ENCODE measurements at regions of chr19 and their contacts with region 1.

Region 1: DNA sequence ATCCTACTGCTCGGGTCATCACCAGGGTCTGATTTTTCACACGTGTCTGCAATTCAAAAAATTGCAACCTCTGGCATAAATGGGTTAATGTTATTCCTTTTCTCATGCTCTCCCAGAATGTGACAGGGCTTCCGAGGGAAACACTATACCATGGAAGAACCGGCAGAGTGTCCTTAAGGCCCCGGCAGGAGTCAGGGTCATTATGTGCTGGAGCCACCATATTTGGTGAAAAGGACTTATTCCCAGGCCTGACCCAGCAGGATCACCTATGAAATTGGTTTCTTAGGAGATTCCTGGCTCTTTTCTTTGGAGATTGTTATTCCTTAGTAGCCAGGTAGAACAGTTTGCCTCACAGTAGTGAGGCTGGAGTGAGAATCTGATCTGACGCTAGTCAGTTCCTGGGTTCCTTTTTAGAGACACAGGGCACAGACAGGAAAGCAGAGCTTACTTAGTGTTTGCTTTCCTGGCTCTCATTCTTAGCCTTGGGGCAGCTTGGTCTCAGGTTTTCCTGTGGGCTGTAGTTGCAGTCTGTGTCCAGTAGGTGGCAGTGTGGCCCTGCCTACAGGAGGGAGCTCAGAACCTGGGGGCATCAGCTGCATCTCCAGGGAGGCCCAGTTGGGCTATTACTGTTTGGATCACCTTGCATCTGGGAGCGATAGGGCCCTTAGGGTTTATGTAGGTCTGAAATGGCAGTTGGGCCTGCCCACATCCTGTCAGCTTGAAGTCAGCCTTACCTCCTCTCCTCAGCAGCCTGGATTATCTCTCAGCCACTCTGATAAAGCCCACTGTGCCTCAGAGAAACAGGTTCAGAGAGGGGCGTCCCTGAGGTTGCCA is 12.4 kb downstream of the SNRNP70 start:
- DNase-seq: peak; percentile 79
- H3K4me3 Mint-ChIP-seq: no peak overlapping the region
- H3K27ac Mint-ChIP-seq: no peak overlapping the region
- H3K4me1 Mint-ChIP-seq: peaks cover 2% of the 10 kb centered on the region
- H3K27me3 Mint-ChIP-seq: no peaks in the 10 kb centered on the region

Region 2: DNA sequence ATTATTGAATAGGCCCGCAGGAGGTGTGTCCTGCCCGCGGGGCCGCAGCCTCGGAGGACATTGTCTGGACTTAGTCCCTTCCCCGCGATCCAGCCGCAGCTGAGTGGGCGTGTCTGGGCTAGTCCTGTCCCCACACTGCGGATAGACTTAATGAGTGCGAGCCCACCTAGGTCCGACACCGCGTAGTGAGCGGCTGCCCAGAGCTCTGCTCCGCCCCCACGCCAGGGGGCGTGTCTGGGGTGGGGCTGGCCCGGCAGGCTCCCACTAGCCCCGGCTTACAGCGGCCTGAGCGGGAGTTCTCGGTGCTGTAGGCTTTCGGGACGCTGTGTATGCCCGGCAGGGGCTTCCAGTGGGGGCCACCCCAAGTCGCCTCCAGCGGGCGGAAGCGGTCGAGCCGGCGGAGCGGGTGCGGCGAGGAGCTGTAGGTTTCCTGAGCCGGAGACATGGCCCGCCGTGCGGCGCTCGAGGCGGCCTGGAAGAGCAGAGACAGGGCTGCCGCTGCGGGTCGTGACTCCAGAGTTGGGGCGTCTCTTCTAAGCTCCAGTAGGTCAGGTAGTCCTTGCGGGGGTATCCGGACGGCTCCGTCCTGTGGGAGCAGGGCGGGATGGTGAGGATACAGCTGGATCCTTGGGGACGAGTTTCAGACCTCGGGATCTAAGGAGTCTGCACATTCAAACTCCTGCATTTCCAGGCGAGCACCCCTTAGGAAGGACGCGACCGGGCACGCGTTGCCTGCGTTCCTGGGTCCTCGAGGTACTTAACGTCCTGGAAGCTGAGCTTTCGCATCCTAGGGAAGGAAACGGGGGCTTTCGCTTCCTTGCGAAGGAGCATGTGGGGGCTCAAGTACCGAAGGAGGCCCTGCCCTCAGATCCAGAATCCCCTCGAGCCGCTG is 41.4 kb before region 1 on chr19:
- CTCF ChIA-PET with region 1: interaction called, 11 read pairs
- POLR2A ChIA-PET with region 1: no interaction called
- intact Hi-C with region 1: no loop called
- DNase-seq: peak; percentile 66
- H3K4me3 Mint-ChIP-seq: peak overlapping the region; percentile 48
- H3K27ac Mint-ChIP-seq: no peak overlapping the region
- H3K4me1 Mint-ChIP-seq: peaks cover 21% of the 10 kb centered on the region
- H3K27me3 Mint-ChIP-seq: peaks cover 24% of the 10 kb centered on the region

Region 3: GRCh38 chr19:49118565-49119410 is 21.1 kb after region 1 on chr19 and contains the start of gene C19orf73:
- CTCF ChIA-PET with region 1: interaction called, 65 read pairs
- POLR2A ChIA-PET with region 1: interaction called, 8 read pairs
- intact Hi-C with region 1: no loop called
- DNase-seq: peak; percentile 96
- H3K4me3 Mint-ChIP-seq: peak within 1 kb of the TSS; percentile 81
- H3K27ac Mint-ChIP-seq: peak within 1 kb of the TSS; percentile 84
- H3K4me1 Mint-ChIP-seq: peaks cover 28% of the 10 kb centered on the region
- H3K27me3 Mint-ChIP-seq: peaks cover 7% of the 10 kb centered on the region
- total RNA-seq, gene C19orf73: 1.4 TPM

Region 4: DNA sequence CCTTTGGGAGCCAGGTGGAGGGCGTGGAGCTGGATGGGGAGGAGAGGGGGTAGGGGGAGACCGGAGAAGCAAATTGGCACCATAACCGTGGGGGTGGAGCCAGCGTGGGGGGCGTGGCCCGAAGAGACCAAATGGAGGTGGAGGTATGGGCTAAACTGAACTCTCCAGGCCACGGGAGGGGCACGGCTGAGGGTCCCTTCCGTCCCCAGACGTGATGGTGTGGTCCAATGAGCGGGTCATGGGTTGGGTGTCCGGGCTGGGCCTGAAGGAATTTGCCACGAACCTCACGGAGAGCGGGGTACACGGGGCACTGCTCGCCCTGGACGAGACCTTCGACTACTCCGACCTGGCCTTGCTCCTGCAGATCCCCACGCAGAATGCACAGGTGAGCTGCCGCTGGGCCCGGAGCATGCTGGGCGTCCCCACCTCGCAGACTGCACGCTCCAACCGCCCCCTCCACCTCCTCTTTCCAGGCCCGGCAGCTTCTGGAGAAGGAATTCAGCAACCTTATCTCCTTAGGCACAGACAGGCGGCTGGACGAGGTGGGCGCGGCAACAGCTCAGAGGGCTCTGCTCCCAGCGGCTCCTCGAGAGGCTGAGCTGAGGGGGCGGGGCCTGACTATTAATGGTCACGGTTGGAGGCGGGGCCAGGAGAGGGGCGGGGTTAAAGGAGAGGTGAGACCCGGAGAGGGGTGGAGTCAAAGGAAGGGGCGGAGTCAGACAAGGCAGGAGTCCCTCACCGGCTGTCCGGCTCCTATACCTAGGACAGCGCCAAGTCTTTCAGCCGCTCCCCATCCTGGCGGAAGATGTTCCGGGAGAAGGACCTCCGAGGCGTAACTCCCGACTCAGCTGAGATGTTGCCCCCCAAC is 51.3 kb after region 1 on chr19:
- CTCF ChIA-PET with region 1: interaction called, 56 read pairs
- POLR2A ChIA-PET with region 1: no interaction called
- intact Hi-C with region 1: loop called (anchors 1 kb)
- DNase-seq: peak; percentile 90
- H3K4me3 Mint-ChIP-seq: peak overlapping the region; percentile 46
- H3K27ac Mint-ChIP-seq: no peak overlapping the region
- H3K4me1 Mint-ChIP-seq: peaks cover 28% of the 10 kb centered on the region
- H3K27me3 Mint-ChIP-seq: peaks cover 62% of the 10 kb centered on the region

Region 5: DNA sequence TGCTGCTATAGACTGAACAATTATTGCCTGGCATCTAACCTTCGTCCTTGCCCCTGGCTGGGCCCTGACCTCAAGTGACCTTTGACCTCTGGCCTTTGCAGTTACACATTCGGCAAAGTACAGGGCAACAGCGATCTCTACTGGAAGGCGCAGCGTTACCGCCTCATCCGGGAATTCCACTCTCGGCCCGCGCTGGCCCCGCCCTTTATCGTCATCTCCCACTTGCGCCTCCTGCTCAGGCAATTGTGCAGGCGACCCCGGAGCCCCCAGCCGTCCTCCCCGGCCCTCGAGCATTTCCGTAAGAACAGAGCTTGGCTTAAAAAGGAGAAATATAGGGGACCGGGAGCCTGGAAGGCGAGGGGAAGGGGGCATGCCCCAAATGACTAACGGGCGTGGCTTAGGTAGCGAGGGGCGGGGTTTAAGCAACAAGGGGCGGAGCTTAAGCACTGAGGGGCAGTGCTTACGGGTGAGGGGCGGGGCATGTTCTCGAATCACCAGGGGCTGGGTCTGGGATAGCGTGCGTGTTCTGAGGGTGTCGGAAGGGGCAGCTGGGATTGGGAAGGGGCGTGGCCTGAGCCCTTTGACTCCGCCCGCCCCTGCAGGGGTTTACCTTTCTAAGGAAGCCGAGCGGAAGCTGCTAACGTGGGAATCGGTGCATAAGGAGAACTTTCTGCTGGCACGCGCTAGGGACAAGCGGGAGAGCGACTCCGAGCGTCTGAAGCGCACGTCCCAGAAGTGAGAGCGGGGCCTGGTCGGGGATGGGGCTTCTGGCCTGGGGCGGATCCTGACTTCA is 112.6 kb after region 1 on chr19:
- CTCF ChIA-PET with region 1: interaction called, 22 read pairs
- POLR2A ChIA-PET with region 1: no interaction called
- intact Hi-C with region 1: no loop called
- DNase-seq: peak; percentile 57
- H3K4me3 Mint-ChIP-seq: no peak overlapping the region
- H3K27ac Mint-ChIP-seq: no peak overlapping the region
- H3K4me1 Mint-ChIP-seq: peaks cover 5% of the 10 kb centered on the region
- H3K27me3 Mint-ChIP-seq: peaks cover 3% of the 10 kb centered on the region